PC-3 (cell line): ENCODE measurements at regions of chr4 and their contacts with region 1.

Region 1: GRCh38 chr4:152970102-152970820 is 34.1 kb downstream of the FHDC1 start:
- DNase-seq: peak; percentile 92
- ATAC-seq: peak; percentile 82
- H3K4me3 ChIP-seq: no peak overlapping the region; the same call in 1 of the 2 replicates
- H3K27ac ChIP-seq: peak overlapping the region; percentile 79
- H3K4me1 ChIP-seq: peaks cover 43% of the 10 kb centered on the region
- H3K27me3 ChIP-seq: no peaks in the 10 kb centered on the region
- CTCF ChIP-seq: no peak

Region 2: GRCh38 chr4:153004081-153004480 is 33.8 kb after region 1 on chr4:
- CTCF ChIA-PET with region 1: no interaction called
- POLR2A ChIA-PET with region 1: interaction called, 12 read pairs
- intact Hi-C with region 1: no loop called
- DNase-seq: no peak
- ATAC-seq: no peak
- H3K4me3 ChIP-seq: no peak overlapping the region
- H3K27ac ChIP-seq: no peak overlapping the region
- H3K4me1 ChIP-seq: no peaks in the 10 kb centered on the region
- H3K27me3 ChIP-seq: no peaks in the 10 kb centered on the region
- CTCF ChIP-seq: no peak

Region 3: GRCh38 chr4:153083447-153083947 is 113.2 kb after region 1 on chr4:
- CTCF ChIA-PET with region 1: no interaction called
- POLR2A ChIA-PET with region 1: interaction called, 4 read pairs
- intact Hi-C with region 1: loop called (anchors 10 kb)
- DNase-seq: peak; percentile 80
- ATAC-seq: peak; percentile 84
- H3K4me3 ChIP-seq: no peak overlapping the region
- H3K27ac ChIP-seq: no peak overlapping the region
- H3K4me1 ChIP-seq: no peaks in the 10 kb centered on the region; the same call in 1 of the 2 replicates
- H3K27me3 ChIP-seq: no peaks in the 10 kb centered on the region
- CTCF ChIP-seq: peak; percentile 68